ENCODE measurements at regions of chr5 and their contacts with region 1.

Region 1: GRCh38 chr5:137778772-137779564 is 24.8 kb upstream of the HNRNPA0 start:
- DNase-seq: no peak
- H3K4me3 ChIP-seq: no peak overlapping the region
- H3K27ac ChIP-seq: no peak overlapping the region
- H3K4me1 ChIP-seq: no peaks in the 10 kb centered on the region
- H3K27me3 ChIP-seq: no peaks in the 10 kb centered on the region
- CTCF ChIP-seq: peak; percentile 73 to 86 (median 79)

Region 2: DNA sequence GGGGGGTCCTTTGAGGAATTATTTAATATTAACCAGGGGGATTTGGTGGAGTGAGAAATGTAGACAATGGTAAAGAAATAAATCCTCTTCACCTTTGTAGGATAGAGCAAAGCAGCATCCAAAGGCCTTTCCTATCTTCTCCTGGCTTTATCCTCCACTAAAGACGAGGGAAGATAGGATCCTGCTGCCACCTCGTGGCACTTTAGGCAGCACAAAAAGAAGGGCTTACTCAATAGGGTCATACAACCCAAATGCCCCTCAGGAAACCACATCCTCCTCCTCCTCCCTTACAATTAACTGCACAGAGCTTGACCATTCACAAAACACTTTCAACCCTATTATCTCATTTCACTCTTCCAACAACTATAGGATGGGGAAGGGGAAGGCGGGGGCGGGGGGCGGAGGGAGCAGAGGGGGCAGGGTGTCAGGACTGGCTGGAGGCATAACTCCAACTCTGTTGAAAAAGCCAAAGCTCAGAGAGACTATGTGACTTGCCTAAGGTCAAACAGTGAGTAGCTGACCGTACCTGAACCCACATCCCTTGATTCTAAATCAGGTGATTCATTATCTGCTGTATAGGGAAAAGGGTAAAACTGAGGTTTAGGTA is 43.3 kb after region 1 on chr5:
- intact Hi-C with region 1: loop called (anchors 1 kb)
- DNase-seq: no peak
- H3K4me3 ChIP-seq: no peak overlapping the region
- H3K27ac ChIP-seq: peak overlapping the region in 1 of 2 donors; percentile 51
- H3K4me1 ChIP-seq: no peaks in the 10 kb centered on the region
- H3K27me3 ChIP-seq: no peaks in the 10 kb centered on the region
- CTCF ChIP-seq: peak; percentile 8 to 59 (median 20)

Region 3: DNA sequence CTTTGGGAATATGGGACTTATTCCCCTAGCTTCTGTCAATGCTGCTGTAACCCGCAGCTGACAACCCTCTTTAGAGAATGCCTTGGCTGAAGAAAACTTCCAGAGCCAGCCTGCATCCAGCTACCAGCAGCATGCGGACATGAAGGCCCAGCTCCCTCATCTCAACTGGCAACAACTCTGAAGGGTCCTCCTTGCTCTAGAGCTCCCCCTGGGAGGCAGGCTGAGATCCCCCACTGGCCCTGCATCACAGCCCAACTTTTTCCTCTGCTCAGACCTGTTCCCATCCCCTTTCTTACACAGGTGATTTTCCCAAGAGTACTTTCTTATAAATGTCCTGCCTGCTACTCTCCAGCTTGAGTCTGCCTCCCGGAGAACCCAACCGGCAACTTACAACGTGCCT is 286.1 kb after region 1 on chr5:
- intact Hi-C with region 1: loop called (anchors 10 kb)
- DNase-seq: no peak
- H3K4me3 ChIP-seq: no peak overlapping the region
- H3K27ac ChIP-seq: no peak overlapping the region
- H3K4me1 ChIP-seq: peaks cover 0 to 3% of the 10 kb centered on the region in 2 donors
- H3K27me3 ChIP-seq: no peaks in the 10 kb centered on the region
- CTCF ChIP-seq: no peak

Region 4: DNA sequence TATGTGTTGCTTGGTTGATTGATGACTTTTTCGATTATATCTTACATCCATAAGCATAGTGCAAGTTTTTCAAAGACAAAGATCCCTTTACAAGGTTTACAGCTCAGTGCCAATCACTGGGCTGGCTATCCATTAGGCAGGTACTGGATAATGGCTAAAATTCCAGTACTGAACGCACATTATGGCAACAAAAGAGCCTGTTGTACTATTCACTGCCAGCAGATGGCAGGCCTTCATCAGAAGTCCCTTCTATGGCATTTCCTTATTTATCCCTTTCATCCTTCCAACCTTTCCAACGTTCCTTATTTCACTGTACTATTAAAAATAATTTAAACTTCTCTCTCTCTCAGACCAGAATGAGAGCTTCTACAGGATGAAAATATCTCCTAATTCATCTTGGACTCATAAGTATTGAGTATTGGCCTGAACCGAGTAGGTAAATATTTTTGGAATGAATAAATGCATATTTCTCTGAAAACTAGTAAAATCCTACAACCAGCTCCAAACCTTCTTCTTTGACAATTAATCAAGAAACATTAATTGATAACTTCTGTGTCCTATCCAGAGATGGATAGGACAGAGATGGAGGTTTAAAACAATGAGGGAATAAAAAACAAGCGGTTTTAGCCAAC is 298.2 kb after region 1 on chr5:
- intact Hi-C with region 1: no loop called
- DNase-seq: peak in 1 of 2 donors; percentile 77
- H3K4me3 ChIP-seq: no peak overlapping the region
- H3K27ac ChIP-seq: no peak overlapping the region
- H3K4me1 ChIP-seq: no peaks in the 10 kb centered on the region
- H3K27me3 ChIP-seq: no peaks in the 10 kb centered on the region
- CTCF ChIP-seq: peak; percentile 64 to 82 (median 68)

Region 5: DNA sequence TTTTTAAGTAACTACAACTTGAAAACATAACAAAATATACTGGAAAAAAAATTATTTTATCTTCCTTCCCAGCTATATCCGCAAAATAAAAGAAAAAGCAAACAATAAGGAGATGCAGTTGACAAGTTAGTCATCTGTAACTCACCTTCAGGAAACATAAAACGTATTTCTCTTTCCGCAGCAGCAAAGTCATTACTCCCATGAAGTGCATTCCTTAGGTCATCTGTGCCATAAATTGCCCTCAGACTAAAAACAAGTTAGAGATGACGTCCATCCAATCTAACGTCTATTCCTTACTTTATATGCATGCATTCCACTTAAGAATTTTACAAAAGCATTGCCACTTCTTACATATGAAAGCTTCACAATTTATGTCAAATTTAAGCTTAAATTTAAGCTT is 349.4 kb after region 1 on chr5:
- intact Hi-C with region 1: loop called (anchors 2 kb)
- DNase-seq: no peak
- H3K4me3 ChIP-seq: no peak overlapping the region
- H3K27ac ChIP-seq: no peak overlapping the region
- H3K4me1 ChIP-seq: no peaks in the 10 kb centered on the region
- H3K27me3 ChIP-seq: no peaks in the 10 kb centered on the region
- CTCF ChIP-seq: no peak

Region 6: DNA sequence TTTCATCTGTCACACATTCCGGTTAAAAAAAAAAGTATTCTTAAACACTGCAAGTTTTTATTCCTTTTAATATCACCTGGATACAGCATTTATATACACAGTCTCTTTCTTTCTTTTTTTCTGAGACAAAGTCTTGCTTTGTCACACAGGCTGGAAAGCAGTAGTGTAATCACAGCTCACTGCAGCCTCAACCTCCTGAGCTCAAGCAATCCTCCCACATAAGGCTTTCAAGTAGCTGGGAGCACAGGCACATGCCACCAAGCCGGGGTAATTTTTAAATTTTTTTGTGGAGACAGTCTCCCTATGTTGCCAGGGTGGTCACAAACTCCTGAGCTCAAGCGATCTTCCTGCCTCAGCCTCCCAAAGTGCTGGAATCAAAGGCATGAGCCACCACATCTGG is 413.9 kb after region 1 on chr5:
- intact Hi-C with region 1: no loop called
- DNase-seq: no peak
- H3K4me3 ChIP-seq: no peak overlapping the region
- H3K27ac ChIP-seq: no peak overlapping the region
- H3K4me1 ChIP-seq: no peaks in the 10 kb centered on the region
- H3K27me3 ChIP-seq: no peaks in the 10 kb centered on the region
- CTCF ChIP-seq: no peak